Activated B cell treated with CpG ODN at 0.5 μM for 24 hours (primary cell): ENCODE measurements at regions of chr11 and their contacts with region 1.

Region 1: DNA sequence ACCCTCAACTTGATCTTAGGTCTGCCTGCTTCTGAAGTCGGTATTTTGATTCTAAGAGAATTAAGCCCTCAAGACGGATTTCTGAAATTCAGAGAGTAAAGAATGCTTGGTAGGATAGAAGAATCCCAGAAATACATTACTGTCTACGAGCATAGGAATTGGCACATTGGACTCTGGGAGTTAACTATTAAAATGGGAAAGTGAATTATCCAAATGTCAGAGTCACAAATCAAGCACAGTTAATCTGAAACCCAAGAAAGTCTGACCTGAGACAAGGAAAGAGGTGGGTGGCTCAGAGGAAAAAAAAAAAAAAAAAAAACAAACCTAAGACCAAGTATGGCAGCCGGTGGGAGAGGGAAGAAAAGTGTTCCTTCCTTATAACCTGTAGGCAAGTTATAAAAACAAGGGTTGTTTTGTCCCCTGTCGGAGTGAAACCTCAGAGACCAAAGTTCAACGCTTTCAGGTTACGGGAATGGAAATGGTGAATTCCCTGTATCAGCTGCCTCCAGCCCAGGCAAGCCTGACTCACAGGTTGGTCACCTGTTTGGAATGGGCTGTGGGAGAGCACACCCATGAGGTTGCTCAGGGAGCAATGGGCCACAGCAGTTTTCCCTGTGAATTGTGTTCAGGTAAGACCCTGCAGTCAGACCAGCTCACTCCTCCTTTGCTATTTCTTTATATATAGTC is 139.0 kb downstream of the ETS1 start:
- DNase-seq: no peak
- ATAC-seq: no peak
- H3K4me3 Mint-ChIP-seq: no peak overlapping the region
- H3K27ac Mint-ChIP-seq: no peak overlapping the region
- H3K4me1 Mint-ChIP-seq: peaks cover 52% of the 10 kb centered on the region
- H3K27me3 Mint-ChIP-seq: no peaks in the 10 kb centered on the region
- CTCF ChIP-seq: no peak

Region 2: GRCh38 chr11:128412847-128413791 is 35.2 kb before region 1 on chr11:
- CTCF ChIA-PET with region 1: no interaction called
- POLR2A ChIA-PET with region 1: interaction called, 4 read pairs
- intact Hi-C with region 1: loop called (anchors 5 kb)
- DNase-seq: no peak
- ATAC-seq: peak; percentile 73
- H3K4me3 Mint-ChIP-seq: peak overlapping the region; percentile 69
- H3K27ac Mint-ChIP-seq: peak overlapping the region; percentile 74
- H3K4me1 Mint-ChIP-seq: peaks cover 32% of the 10 kb centered on the region
- H3K27me3 Mint-ChIP-seq: no peaks in the 10 kb centered on the region
- CTCF ChIP-seq: no peak

Region 3: DNA sequence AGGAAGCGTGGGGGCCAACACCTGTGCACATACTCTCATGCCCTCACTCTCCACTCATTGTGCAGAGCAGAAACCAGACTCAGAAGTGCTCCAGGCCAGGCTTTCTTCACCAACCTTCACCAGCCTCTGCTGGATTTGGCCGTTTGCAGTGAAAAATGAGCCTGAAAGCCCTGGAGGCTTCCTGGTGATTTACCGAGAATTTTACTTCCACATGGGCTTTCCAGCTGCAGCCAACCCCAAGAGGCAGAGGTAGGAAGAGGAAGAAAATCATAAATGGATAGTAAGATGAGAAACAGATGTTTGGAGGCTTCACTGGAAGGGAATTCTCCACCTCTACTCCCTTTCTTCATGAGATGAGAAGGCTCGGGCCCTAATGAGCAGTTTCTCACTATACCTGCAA is 16.4 kb before region 1 on chr11:
- CTCF ChIA-PET with region 1: no interaction called
- POLR2A ChIA-PET with region 1: no interaction called
- intact Hi-C with region 1: loop called (anchors 2 kb)
- DNase-seq: no peak
- ATAC-seq: no peak
- H3K4me3 Mint-ChIP-seq: no peak overlapping the region
- H3K27ac Mint-ChIP-seq: no peak overlapping the region
- H3K4me1 Mint-ChIP-seq: peaks cover 8% of the 10 kb centered on the region
- H3K27me3 Mint-ChIP-seq: no peaks in the 10 kb centered on the region
- CTCF ChIP-seq: no peak